Activated CD4-positive, alpha-beta T cell treated with anti-CD3 and anti-CD28 coated beads for 36 hours (primary cell): ENCODE measurements at regions of chr12 and their contacts with region 1.

Region 1: GRCh38 chr12:120186654-120187053 is 7.9 kb downstream of the GCN1 start:
- DNase-seq: no peak
- ATAC-seq: no peak
- H3K4me3 Mint-ChIP-seq: no peak overlapping the region
- H3K27ac Mint-ChIP-seq: peak overlapping the region; percentile 23
- H3K4me1 Mint-ChIP-seq: peaks cover 12% of the 10 kb centered on the region
- H3K27me3 Mint-ChIP-seq: no peaks in the 10 kb centered on the region

Region 2: DNA sequence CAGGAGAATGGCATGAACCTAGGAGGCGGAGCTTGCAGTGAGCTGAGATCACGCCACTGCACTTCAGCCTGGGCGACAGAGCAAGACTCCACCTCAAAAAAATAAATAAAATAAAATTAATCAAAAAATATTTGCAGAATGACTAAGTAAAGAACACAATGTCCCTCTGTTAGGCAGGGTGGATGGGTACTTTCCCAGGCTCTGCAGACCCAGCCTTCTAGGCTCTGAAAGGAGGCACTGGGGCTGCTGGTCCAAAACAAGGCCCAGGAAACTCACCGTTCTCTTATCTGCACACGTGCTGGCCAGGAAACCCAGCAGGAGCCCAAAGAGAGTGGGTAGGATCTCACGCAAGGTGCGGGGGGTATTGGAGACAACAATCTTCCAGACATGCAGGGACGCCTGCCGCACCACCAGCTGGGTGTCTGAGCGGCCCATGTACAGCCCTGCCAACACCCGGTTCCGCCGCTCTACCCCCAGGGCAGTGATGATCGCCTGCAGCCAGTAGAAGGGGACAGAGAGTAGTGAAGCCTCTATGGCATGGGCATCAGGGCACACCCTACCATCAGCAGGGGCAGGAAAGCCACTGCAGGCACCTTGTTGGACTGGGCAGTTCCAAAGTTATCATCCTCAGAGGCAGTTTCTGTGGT is 44.3 kb before region 1 on chr12:
- CTCF ChIA-PET with region 1: no interaction called
- POLR2A ChIA-PET with region 1: no interaction called
- intact Hi-C with region 1: loop called in 1 of 2 experiments (anchors 5 kb)
- DNase-seq: no peak
- ATAC-seq: no peak
- H3K4me3 Mint-ChIP-seq: no peak overlapping the region
- H3K27ac Mint-ChIP-seq: no peak overlapping the region
- H3K4me1 Mint-ChIP-seq: no peaks in the 10 kb centered on the region
- H3K27me3 Mint-ChIP-seq: no peaks in the 10 kb centered on the region